Ascending aorta (tissue), 2 donors: ENCODE measurements at regions of chr12 and their contacts with region 1.

Region 1: DNA sequence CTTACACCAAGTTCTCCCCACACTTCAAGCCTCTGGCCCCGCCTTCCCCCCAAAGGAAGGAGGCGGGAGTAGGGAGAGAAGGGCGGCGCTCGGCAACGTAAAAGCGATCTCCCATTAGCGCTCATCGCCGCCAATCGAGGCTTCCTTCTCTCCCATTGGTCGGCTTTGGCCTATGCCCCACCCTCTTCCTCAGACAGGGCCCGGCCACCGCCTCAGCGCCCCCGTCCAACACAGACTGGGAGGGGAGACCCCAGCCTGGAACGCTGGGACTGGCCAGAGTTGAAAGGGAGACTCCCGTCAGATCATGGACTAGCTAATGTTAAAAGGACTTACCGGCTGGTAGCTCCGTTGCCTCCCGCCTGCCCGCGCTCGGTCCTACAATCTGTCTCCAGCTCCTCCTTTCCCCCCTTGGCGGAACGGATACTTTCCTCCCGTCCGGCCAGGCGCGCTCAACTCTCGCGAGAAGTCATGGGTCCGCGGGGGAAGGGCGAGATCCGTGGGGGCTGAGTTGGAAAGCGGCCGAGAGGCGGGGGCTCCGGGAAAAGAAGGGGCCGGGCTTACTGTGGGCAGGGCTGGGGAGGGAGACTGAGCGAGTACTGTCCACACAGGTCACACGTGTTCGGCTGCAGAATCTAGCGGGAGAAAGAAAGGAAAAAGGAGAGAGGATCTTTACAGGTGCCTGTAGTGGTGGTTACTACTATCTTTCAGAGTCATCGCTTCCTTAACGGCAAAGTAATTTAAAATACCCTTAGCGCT is at the start of gene ATF7:
- DNase-seq: peak; percentile 88 to 98
- H3K4me3 ChIP-seq: peak within 1 kb of the TSS; percentile 73 to 74
- H3K27ac ChIP-seq: peak within 1 kb of the TSS; percentile 81 to 93
- H3K4me1 ChIP-seq: peaks cover 0 to 15% of the 10 kb centered on the region in 2 donors
- H3K27me3 ChIP-seq: no peaks in the 10 kb centered on the region
- CTCF ChIP-seq: no peak
- total RNA-seq, gene ATF7: 67.6 TPM

Region 2: DNA sequence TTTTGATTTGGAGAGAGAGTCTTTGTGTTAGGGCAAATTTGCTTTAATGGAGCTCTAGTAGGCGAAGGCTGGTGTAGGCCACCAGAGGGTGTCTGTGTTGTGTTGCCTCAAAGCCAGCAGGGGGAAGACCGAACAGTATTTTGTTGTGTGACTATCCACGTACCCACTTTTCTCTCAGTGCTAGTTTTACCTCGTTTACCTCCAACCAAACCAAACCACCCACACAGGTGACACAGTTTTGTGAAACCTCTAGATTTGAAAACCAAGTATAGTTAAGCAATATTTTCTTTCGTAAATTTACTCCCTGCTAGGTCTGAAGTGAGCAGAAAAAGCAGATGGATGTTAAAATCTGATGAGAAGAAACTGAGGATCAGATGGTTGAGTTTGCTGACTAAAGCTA is 82.6 kb before region 1 on chr12:
- intact Hi-C with region 1: loop called (anchors 2 kb)
- DNase-seq: peak in 1 of 2 donors; percentile 78
- H3K4me3 ChIP-seq: no peak overlapping the region
- H3K27ac ChIP-seq: peak overlapping the region; percentile 57 to 65
- H3K4me1 ChIP-seq: peaks cover 0 to 7% of the 10 kb centered on the region in 2 donors
- H3K27me3 ChIP-seq: no peaks in the 10 kb centered on the region
- CTCF ChIP-seq: peak; percentile 77 to 94 (median 89)

Region 3: GRCh38 chr12:53561590-53561953 is 64.6 kb before region 1 on chr12:
- intact Hi-C with region 1: loop called (anchors 5 kb)
- DNase-seq: no peak
- H3K4me3 ChIP-seq: no peak overlapping the region
- H3K27ac ChIP-seq: peak overlapping the region; percentile 71 to 78
- H3K4me1 ChIP-seq: peaks cover 22 to 63% of the 10 kb centered on the region in 2 donors
- H3K27me3 ChIP-seq: no peaks in the 10 kb centered on the region
- CTCF ChIP-seq: no peak

Region 4: DNA sequence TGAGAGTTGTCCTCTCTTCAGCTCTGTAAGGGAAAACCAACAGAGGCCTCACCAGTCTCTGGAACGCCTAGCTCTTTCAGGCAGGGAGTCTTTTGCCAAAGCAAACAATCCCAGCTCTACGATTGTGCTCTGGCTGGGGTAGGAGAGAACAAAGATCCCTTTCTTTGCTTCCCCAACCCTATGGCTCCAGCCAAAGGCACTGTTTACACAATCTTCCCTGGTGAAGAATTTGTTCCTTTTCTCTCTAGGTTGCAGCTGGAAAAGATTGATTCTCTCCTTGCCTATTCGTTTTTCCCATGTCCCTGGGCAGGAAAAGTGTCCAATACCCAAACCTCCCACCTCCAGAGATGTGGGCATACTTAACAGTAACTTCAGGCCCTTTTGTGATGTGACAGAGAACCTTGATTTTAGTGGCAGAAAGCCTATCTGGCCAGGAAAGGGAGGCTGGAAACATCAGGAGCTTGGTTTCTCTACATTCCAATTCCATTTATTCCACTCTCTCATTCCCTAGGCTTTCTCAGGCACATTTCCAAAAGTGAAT is 33.0 kb after region 1 on chr12:
- intact Hi-C with region 1: loop called (anchors 2 kb)
- DNase-seq: peak in 1 of 2 donors; percentile 81
- H3K4me3 ChIP-seq: peak overlapping the region; percentile 7 to 50
- H3K27ac ChIP-seq: peak overlapping the region; percentile 90 to 91
- H3K4me1 ChIP-seq: peaks cover 3 to 23% of the 10 kb centered on the region in 2 donors
- H3K27me3 ChIP-seq: no peaks in the 10 kb centered on the region
- CTCF ChIP-seq: no peak